B cell (primary cell): ENCODE measurements at regions of chr2 and their contacts with region 1.

Region 1: GRCh38 chr2:157420771-157421323 is 23.0 kb downstream of the CYTIP start:
- DNase-seq: peak; percentile 77
- ATAC-seq: peak; percentile 71
- H3K4me3 ChIP-seq: no peak overlapping the region
- H3K4me3 Mint-ChIP-seq: peak overlapping the region; percentile 78
- H3K27ac ChIP-seq: peak overlapping the region; percentile 58 to 88
- H3K27ac Mint-ChIP-seq: peak overlapping the region; percentile 94
- H3K4me1 ChIP-seq: peaks cover 49 to 52% of the 10 kb centered on the region in 2 donors
- H3K4me1 Mint-ChIP-seq: peaks cover 57% of the 10 kb centered on the region
- H3K27me3 ChIP-seq: no peaks in the 10 kb centered on the region
- H3K27me3 Mint-ChIP-seq: no peaks in the 10 kb centered on the region
- CTCF ChIP-seq: no peak

Region 2: DNA sequence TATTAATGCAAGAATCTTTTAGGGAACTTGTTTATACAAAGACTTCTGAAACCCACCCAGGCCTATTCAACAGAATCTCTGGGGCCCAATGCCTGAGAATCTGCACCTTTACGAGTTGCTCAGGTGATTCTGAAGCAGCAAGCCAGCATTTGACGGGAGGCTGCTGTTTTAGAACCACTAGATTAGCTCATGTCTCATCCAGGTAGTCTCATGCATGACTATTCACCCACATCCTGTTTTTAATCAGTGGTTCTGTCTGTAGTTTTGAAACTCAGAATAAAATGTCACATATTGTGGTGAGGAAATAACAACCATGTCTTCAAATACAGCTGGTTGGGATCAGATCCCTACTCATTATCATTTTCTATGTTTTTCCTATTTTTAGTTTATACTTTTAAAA is 16.5 kb before region 1 on chr2:
- CTCF ChIA-PET with region 1: interaction called, 17 read pairs
- POLR2A ChIA-PET with region 1: interaction called, 5 read pairs
- intact Hi-C with region 1: loop called (anchors 1 kb)
- DNase-seq: peak; percentile 91
- ATAC-seq: peak; percentile 91
- H3K4me3 ChIP-seq: peak overlapping the region in 1 of 5 experiments; percentile 46
- H3K4me3 Mint-ChIP-seq: peak overlapping the region; percentile 68
- H3K27ac ChIP-seq: peak overlapping the region; percentile 67 to 86
- H3K27ac Mint-ChIP-seq: peak overlapping the region; percentile 92
- H3K4me1 ChIP-seq: peaks cover 29% of the 10 kb centered on the region in 2 donors
- H3K4me1 Mint-ChIP-seq: peaks cover 51% of the 10 kb centered on the region
- H3K27me3 ChIP-seq: no peaks in the 10 kb centered on the region
- H3K27me3 Mint-ChIP-seq: no peaks in the 10 kb centered on the region
- CTCF ChIP-seq: no peak